ENCODE measurements at regions of chr16 and their contacts with region 1.

Region 1: GRCh38 chr16:56608043-56608875 is at the start of gene MT2A:
- DNase-seq: peak; percentile 99
- ATAC-seq: peak; percentile 85
- total RNA-seq, gene MT2A: 95.2 TPM

Region 2: GRCh38 chr16:56625140-56625942 is 17.1 kb after region 1 on chr16 and contains the start of gene MT1E:
- intact Hi-C with region 1: loop called (anchors 1 kb)
- DNase-seq: peak; percentile 91
- ATAC-seq: peak; percentile 96
- total RNA-seq, gene MT1E: 136 TPM

Region 3: DNA sequence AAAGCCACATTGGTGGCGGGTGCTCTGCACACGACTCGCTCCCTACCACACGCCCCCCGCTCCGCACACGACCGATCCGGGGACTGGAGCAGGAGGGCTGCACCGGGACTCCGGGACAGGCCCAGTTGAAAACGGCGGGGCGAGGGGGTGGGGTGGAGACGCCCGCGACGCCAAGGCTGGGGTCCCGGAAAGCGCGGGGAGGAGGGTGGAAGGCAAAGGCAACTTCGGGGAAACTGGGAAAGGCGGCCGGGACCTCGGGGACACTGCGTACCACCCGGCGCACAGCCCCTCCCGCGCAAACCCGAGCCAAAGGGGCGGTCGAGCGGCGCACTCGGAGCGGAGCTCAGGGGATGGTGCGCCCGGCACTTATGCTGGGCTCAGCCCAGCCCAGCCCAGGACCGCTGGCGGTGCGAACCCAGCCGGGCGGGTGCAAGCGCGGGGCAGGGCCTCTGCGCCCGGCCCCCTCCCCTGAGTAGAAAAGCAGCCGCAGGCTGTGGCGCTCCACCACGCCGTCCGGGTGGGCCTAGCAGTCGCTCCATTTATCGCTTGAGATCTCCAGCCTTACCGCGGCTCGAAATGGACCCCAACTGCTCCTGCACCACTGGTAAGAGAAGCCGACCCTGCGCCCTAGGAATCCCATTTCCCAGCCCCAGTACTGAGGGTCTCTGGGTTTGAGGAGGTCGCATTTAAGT is 24.0 kb after region 1 on chr16 and contains the start of gene MT1M:
- intact Hi-C with region 1: loop called (anchors 2 kb)
- DNase-seq: peak; percentile 86
- ATAC-seq: peak; percentile 90
- total RNA-seq, gene MT1M: 6.7 TPM

Region 4: GRCh38 chr16:56667581-56668571 is 59.6 kb after region 1 on chr16 and contains the start of gene MT1G:
- intact Hi-C with region 1: no loop called
- DNase-seq: peak; percentile 82
- ATAC-seq: peak; percentile 73
- total RNA-seq, gene MT1G: not detected

Region 5: GRCh38 chr16:56681939-56682702 is 73.9 kb after region 1 on chr16 and contains the start of gene MT1X:
- intact Hi-C with region 1: loop called (anchors 2 kb)
- DNase-seq: peak; percentile 96
- ATAC-seq: peak; percentile 95
- total RNA-seq, gene MT1X: 108 TPM

Measured in Right ventricle myocardium inferior (tissue), 1 donor.